Cardiac septum (tissue), 1 donor: ENCODE measurements at regions of chr10 and their contacts with region 1.

Region 1: DNA sequence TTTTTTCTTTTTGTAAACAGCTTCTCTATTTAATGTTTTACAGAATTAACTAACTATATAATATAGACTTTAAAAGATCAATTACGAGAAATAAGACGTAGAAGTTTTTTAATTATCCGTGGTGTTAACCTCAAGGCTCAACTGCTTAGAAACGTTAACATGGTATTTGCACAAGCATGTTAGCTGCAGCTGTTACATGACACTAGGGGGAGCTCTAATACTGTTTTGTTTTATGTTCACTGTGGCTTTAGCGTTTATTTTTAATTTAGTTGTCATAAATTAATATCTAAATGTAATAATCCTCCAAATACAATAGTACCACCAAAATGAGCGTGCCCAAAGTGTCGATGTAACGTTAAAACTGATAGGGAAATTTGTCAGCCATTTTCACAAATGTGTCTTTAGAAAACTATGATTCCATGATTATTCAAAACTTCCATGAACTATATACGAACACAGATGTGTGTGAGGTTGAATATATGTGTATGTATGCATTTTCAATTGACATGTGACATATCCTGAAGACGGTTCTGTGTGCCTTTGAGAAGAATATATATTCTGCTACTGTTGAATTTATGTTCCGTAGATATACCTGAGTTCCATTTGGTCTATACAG is 828.8 kb upstream of the MBL2 start:
- DNase-seq: no peak

Region 2: GRCh38 chr10:53754596-53755250 is 153.4 kb after region 1 on chr10:
- intact Hi-C with region 1: no loop called
- DNase-seq: no peak

Region 3: GRCh38 chr10:54402576-54402975 is 801.2 kb after region 1 on chr10:
- intact Hi-C with region 1: loop called (anchors 5 kb)
- DNase-seq: no peak